ENCODE measurements at regions of chr10 and their contacts with region 1.

Region 1: GRCh38 chr10:62244780-62245467 is 23.7 kb downstream of the RTKN2 start:
- DNase-seq: peak in 2 of 3 donors; percentile 69 to 70
- H3K4me3 ChIP-seq: peak overlapping the region in 1 of 3 experiments; percentile 77
- H3K4me3 Mint-ChIP-seq: no peak overlapping the region
- H3K27ac ChIP-seq: peak overlapping the region in 1 of 2 donors; percentile 80
- H3K27ac Mint-ChIP-seq: peak overlapping the region in 6 of 7 donors; percentile 15 to 67 (median 50)
- H3K4me1 ChIP-seq: peaks cover 24 to 36% of the 10 kb centered on the region in 2 donors
- H3K4me1 Mint-ChIP-seq: peaks cover 28% of the 10 kb centered on the region
- H3K27me3 ChIP-seq: no peaks in the 10 kb centered on the region
- H3K27me3 Mint-ChIP-seq: peaks cover 0 to 2% (median 0%) of the 10 kb centered on the region in 3 donors
- CTCF ChIP-seq: peak; percentile 90

Region 2: DNA sequence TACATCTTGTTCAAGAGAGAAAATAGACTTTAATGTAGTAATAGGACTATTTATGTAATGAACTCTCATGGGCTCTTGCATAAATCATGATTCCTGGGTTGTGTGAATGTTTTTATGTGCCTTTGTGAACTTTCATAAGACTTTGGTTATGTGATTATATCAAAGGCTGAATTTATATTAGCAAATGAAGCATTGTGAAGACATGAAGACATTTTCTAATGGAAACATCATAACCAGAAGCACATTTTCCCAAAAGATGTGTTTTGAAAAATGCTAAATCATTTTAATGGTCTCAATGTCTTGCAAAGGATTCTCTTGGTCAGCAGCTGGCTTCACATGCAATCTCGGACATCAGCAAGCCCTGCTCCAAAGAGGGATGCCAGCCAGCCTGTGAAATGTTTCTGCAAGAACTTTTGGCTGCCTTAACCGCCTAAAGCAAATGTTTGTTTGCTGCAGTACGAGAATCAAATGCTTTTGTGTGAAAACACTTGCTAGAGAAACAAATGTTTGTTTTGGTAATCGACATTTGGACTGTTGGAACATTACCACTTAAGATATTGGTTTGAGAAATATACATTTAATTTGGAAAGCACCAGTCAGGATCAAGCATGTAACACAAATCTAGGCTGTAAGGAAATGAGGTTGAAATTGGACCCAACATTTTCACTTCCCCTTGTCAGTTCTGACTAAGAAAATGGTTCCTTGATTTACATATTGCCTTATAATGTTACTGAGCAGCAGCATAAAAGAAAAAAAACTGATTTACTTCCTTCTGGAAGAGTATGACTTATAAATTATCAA is 78.4 kb before region 1 on chr10:
- intact Hi-C with region 1: loop called in 1 of 2 experiments (anchors 10 kb)
- DNase-seq: peak; percentile 61 to 83 (median 78)
- H3K4me3 ChIP-seq: peak overlapping the region in 1 of 3 experiments; percentile 36
- H3K4me3 Mint-ChIP-seq: no peak overlapping the region
- H3K27ac ChIP-seq: peak overlapping the region; percentile 58 to 79
- H3K27ac Mint-ChIP-seq: peak overlapping the region; percentile 17 to 86 (median 78)
- H3K4me1 ChIP-seq: peaks cover 19 to 32% of the 10 kb centered on the region in 2 donors
- H3K4me1 Mint-ChIP-seq: peaks cover 28% of the 10 kb centered on the region
- H3K27me3 ChIP-seq: no peaks in the 10 kb centered on the region
- H3K27me3 Mint-ChIP-seq: peaks cover 0 to 1% (median 0%) of the 10 kb centered on the region in 3 donors
- CTCF ChIP-seq: no peak

Region 3: DNA sequence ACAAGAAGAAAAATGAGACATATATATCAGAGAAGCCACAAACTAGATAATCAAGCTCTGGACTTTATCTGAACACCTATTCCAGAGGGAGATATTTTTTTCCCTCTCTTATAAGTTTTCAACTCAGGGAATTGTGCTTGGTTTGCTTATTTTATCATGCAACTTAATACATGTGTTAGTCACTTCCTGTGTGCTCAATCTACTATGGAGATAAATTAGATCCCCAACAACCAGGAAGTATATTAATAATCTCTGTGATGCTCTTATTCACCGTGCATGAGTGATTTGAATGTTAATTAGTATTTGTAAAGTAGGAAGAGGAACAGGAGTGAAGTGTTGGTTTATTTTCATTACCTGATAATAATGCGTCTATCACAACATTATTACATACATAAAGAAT is 90.4 kb after region 1 on chr10:
- intact Hi-C with region 1: no loop called
- DNase-seq: no peak
- H3K4me3 ChIP-seq: no peak overlapping the region
- H3K4me3 Mint-ChIP-seq: no peak overlapping the region
- H3K27ac ChIP-seq: no peak overlapping the region
- H3K27ac Mint-ChIP-seq: no peak overlapping the region
- H3K4me1 ChIP-seq: no peaks in the 10 kb centered on the region
- H3K4me1 Mint-ChIP-seq: no peaks in the 10 kb centered on the region
- H3K27me3 ChIP-seq: no peaks in the 10 kb centered on the region
- H3K27me3 Mint-ChIP-seq: peaks cover 0 to 10% (median 5%) of the 10 kb centered on the region in 3 donors
- CTCF ChIP-seq: no peak

Region 4: DNA sequence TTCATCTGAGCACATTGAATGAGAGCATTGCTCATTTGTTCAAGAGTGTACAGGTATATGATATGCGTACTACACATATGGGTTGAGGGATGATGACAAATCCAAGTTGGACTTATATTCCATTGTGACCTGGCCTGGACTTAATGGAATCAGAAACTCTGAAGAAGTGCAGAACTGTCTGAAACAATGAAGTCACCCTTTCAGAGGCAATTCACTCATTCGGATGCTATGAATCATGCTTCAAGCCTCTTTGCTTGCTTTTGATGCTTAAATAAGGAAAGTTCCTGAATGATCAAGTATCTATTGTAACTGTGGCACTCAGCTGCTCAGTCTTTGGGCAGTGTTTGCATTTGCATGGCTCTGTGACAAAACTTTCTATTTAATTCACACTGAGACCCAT is 222.6 kb after region 1 on chr10:
- intact Hi-C with region 1: no loop called
- DNase-seq: no peak
- H3K4me3 ChIP-seq: no peak overlapping the region
- H3K4me3 Mint-ChIP-seq: no peak overlapping the region
- H3K27ac ChIP-seq: no peak overlapping the region
- H3K27ac Mint-ChIP-seq: no peak overlapping the region
- H3K4me1 ChIP-seq: no peaks in the 10 kb centered on the region
- H3K4me1 Mint-ChIP-seq: peaks cover under 1% of the 10 kb centered on the region
- H3K27me3 ChIP-seq: peaks cover 0 to 2% of the 10 kb centered on the region in 2 donors
- H3K27me3 Mint-ChIP-seq: peaks cover 0 to 4% (median 3%) of the 10 kb centered on the region in 3 donors
- CTCF ChIP-seq: no peak